Naive thymus-derived CD4-positive, alpha-beta T cell (primary cell): ENCODE measurements at regions of chr3 and their contacts with region 1.

Region 1: DNA sequence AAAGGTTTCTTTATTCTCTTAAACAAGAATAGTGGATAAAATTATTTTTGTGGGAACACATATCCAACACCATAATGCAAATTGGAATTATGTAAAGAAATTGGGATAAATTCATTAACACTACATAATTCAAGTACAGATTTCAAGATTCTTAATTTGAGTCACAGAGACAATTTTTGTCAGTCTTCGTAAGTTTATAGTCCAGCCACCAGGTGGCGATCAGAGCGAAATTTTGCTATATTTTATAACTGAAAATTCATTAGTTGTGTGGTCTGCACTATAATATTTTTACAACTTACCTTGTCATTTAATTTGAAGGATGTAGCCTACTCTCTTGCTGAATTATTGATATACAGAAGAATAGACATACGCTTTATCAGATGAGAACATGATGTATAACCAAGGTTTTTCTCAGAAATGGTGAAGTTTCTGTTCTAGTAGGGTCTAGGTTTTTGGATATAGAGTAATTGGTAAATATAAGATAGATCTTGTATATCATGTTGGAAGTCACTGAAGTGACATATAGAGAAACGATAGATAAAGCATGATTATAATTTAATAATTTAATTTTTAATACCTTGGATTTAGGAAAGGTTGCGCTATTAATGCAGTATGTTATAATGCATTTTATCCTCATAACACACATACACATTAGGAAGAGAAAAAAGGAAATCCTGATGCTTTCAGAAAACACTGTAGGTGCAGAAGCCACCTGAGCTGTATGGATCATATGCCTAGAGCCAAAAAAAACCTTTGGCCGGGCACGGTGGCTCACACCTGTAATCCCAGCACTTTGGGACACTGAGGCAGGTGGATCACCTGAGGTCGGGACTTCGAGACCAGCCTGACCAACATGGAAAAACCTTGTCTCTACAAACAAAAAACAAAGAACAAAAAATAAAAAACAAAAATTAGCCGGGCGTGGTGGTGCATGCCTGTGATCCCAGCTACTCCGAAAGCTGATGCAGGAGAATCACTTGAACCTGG is 31.7 kb downstream of the PLSCR4 start:
- DNase-seq: peak in 7 of 9 donors; percentile 8 to 40 (median 23)
- ATAC-seq: no peak
- H3K4me3 ChIP-seq: no peak overlapping the region
- H3K4me3 Mint-ChIP-seq: no peak overlapping the region
- H3K27ac ChIP-seq: no peak overlapping the region
- H3K27ac Mint-ChIP-seq: no peak overlapping the region
- H3K4me1 ChIP-seq: no peaks in the 10 kb centered on the region
- H3K4me1 Mint-ChIP-seq: no peaks in the 10 kb centered on the region
- H3K27me3 ChIP-seq: no peaks in the 10 kb centered on the region
- H3K27me3 Mint-ChIP-seq: peaks cover 0 to 17% (median 12%) of the 10 kb centered on the region in 5 donors

Region 2: DNA sequence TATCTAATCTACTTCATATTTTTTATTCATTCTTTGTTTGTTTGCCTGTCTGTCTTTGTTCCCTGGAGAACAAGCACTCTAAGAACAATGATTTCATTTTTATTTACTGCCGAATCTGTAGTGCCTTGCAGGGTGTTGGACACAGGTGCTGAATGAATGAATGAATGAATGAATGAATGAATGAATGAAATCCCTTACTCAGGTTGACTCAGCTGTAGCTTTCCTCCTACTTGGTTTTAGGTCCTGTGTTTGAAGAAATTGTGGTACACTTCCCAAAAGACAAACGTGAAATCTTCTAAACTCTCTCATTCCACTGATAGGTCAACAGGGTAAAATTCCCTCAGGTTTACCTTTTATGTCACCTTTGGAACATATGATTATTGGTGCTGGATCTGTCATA is 228.1 kb before region 1 on chr3:
- CTCF ChIA-PET with region 1: no interaction called
- POLR2A ChIA-PET with region 1: no interaction called
- intact Hi-C with region 1: no loop called
- DNase-seq: no peak
- ATAC-seq: no peak
- H3K4me3 ChIP-seq: no peak overlapping the region
- H3K4me3 Mint-ChIP-seq: no peak overlapping the region
- H3K27ac ChIP-seq: no peak overlapping the region
- H3K27ac Mint-ChIP-seq: no peak overlapping the region
- H3K4me1 ChIP-seq: no peaks in the 10 kb centered on the region
- H3K4me1 Mint-ChIP-seq: peaks cover 0 to 6% (median 0%) of the 10 kb centered on the region in 7 donors
- H3K27me3 ChIP-seq: no peaks in the 10 kb centered on the region
- H3K27me3 Mint-ChIP-seq: no peaks in the 10 kb centered on the region

Region 3: DNA sequence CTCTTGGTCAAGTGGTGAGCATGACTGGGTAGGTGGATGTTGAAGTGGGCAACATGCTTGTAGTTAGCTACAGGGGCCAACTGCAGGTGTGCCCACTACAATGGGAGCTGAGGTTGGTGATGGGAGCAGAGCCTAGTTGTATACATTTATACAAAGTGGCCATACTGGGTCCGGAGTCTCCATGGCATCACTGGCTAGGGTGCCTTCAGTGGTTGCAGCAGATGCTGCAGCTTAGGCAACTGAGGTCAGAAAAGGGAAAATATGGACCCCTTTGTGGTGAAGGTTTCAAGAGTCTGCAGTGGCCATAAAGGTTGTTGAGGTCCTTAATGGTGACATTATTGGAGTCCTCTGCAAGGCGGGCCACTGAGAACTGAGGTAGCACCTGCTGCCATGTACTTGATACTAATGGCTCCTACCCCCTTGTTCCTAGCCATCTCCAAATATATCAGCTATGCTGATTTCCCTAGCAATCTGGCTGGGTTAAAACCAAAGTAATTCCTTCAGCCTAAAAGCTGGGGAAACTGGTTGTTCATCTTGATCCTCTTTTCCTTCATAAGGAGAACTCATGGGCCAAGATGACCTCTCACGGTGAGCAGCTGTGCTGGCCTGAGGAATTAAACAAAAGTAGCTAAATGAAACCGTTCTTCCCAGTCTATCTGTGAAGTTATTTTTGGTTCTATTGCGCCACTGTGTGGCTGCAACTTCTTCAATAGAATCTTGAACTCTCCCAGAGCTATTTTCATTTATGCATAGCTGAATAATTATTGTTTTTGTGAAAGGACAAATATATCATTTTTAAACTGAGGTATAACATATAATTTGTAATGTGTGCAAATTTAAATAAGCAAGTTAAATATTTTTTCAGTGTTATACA is 107.7 kb after region 1 on chr3:
- CTCF ChIA-PET with region 1: no interaction called
- POLR2A ChIA-PET with region 1: no interaction called
- intact Hi-C with region 1: loop called in 1 of 2 experiments (anchors 2 kb)
- DNase-seq: no peak
- ATAC-seq: no peak
- H3K4me3 ChIP-seq: no peak overlapping the region
- H3K4me3 Mint-ChIP-seq: no peak overlapping the region
- H3K27ac ChIP-seq: no peak overlapping the region
- H3K27ac Mint-ChIP-seq: no peak overlapping the region
- H3K4me1 ChIP-seq: no peaks in the 10 kb centered on the region
- H3K4me1 Mint-ChIP-seq: no peaks in the 10 kb centered on the region
- H3K27me3 ChIP-seq: no peaks in the 10 kb centered on the region
- H3K27me3 Mint-ChIP-seq: peaks cover 0 to 8% (median 0%) of the 10 kb centered on the region in 5 donors

Region 4: GRCh38 chr3:146577662-146578061 is 358.5 kb after region 1 on chr3:
- CTCF ChIA-PET with region 1: interaction called, 13 read pairs
- POLR2A ChIA-PET with region 1: no interaction called
- intact Hi-C with region 1: loop called in 1 of 2 experiments (anchors 1 kb)
- DNase-seq: peak in 6 of 9 donors; percentile 19 to 46 (median 34)
- ATAC-seq: peak; percentile 67
- H3K4me3 ChIP-seq: no peak overlapping the region
- H3K4me3 Mint-ChIP-seq: no peak overlapping the region
- H3K27ac ChIP-seq: no peak overlapping the region
- H3K27ac Mint-ChIP-seq: no peak overlapping the region
- H3K4me1 ChIP-seq: no peaks in the 10 kb centered on the region
- H3K4me1 Mint-ChIP-seq: peaks cover 0 to 5% (median 0%) of the 10 kb centered on the region in 7 donors
- H3K27me3 ChIP-seq: no peaks in the 10 kb centered on the region
- H3K27me3 Mint-ChIP-seq: peaks cover 0 to 23% (median 3%) of the 10 kb centered on the region in 5 donors

Region 5: DNA sequence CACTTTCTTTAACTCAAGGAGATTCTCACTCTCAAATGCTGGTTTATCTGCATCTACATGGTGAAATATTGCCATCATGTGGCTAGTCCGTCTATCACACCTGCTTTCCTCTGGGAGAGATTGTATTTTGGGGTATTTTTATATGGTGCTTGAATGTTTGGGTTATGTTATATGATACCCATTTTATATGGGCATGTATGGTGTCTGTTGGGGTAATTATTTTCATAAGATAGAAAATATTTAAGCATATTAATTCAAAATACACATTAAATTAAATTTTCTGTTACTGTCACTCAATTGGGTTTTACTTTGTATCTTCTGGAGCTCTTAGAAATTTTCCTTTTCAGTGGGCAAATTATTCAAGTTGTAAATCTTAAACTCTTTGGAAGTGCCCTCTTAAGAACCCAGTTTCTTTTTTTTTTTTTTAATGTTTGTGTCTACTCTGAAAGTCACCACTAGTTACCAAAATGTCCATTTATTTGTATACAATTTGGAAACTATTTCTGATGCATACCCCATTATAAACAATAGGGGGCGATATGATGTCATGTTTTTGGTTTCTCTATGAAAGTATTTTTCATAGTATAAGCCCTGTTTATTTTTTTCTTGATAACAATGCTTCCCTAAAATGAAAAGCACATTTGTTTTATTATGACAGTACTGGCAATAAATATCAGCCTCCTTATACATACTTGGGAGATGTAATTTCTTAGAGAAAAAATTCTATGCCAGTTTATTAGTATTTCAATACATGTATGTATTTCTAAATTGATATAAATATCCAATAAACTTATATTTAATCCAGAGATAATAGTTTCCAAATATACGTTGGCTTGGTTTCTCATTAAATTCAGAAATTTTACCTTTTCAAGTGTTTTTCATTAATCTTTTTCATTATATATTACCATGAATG is 422.0 kb after region 1 on chr3:
- CTCF ChIA-PET with region 1: no interaction called
- POLR2A ChIA-PET with region 1: no interaction called
- intact Hi-C with region 1: loop called (anchors 1 kb)
- DNase-seq: peak in 2 of 9 donors; percentile 1 to 7
- ATAC-seq: no peak
- H3K4me3 ChIP-seq: no peak overlapping the region
- H3K4me3 Mint-ChIP-seq: no peak overlapping the region
- H3K27ac ChIP-seq: no peak overlapping the region
- H3K27ac Mint-ChIP-seq: no peak overlapping the region
- H3K4me1 ChIP-seq: no peaks in the 10 kb centered on the region
- H3K4me1 Mint-ChIP-seq: no peaks in the 10 kb centered on the region
- H3K27me3 ChIP-seq: no peaks in the 10 kb centered on the region
- H3K27me3 Mint-ChIP-seq: peaks cover 0 to 6% (median 5%) of the 10 kb centered on the region in 5 donors

Region 6: GRCh38 chr3:147327849-147328248 is 1108.7 kb after region 1 on chr3:
- CTCF ChIA-PET with region 1: no interaction called
- POLR2A ChIA-PET with region 1: no interaction called
- intact Hi-C with region 1: no loop called
- DNase-seq: no peak
- ATAC-seq: no peak
- H3K4me3 ChIP-seq: no peak overlapping the region
- H3K4me3 Mint-ChIP-seq: no peak overlapping the region
- H3K27ac ChIP-seq: no peak overlapping the region
- H3K27ac Mint-ChIP-seq: no peak overlapping the region
- H3K4me1 ChIP-seq: no peaks in the 10 kb centered on the region
- H3K4me1 Mint-ChIP-seq: no peaks in the 10 kb centered on the region
- H3K27me3 ChIP-seq: no peaks in the 10 kb centered on the region
- H3K27me3 Mint-ChIP-seq: no peaks in the 10 kb centered on the region